ENCODE measurements at regions of chr3 and their contacts with region 1.

Region 1: GRCh38 chr3:177109688-177110330 is 87.5 kb downstream of the TBL1XR1 start:
- DNase-seq: no peak
- ATAC-seq: no peak
- H3K4me3 ChIP-seq: no peak overlapping the region
- H3K27ac ChIP-seq: no peak overlapping the region
- H3K4me1 ChIP-seq: peaks cover 0 to 83% (median 52%) of the 10 kb centered on the region in 9 donors
- H3K27me3 ChIP-seq: no peaks in the 10 kb centered on the region
- CTCF ChIP-seq: no peak

Region 2: GRCh38 chr3:177069514-177070329 is 40.1 kb before region 1 on chr3:
- intact Hi-C with region 1: loop called in 1 of 10 experiments (anchors 10 kb)
- DNase-seq: no peak
- ATAC-seq: no peak
- H3K4me3 ChIP-seq: no peak overlapping the region
- H3K27ac ChIP-seq: no peak overlapping the region
- H3K4me1 ChIP-seq: peaks cover 2 to 62% (median 46%) of the 10 kb centered on the region in 9 donors
- H3K27me3 ChIP-seq: no peaks in the 10 kb centered on the region
- CTCF ChIP-seq: no peak

Region 3: DNA sequence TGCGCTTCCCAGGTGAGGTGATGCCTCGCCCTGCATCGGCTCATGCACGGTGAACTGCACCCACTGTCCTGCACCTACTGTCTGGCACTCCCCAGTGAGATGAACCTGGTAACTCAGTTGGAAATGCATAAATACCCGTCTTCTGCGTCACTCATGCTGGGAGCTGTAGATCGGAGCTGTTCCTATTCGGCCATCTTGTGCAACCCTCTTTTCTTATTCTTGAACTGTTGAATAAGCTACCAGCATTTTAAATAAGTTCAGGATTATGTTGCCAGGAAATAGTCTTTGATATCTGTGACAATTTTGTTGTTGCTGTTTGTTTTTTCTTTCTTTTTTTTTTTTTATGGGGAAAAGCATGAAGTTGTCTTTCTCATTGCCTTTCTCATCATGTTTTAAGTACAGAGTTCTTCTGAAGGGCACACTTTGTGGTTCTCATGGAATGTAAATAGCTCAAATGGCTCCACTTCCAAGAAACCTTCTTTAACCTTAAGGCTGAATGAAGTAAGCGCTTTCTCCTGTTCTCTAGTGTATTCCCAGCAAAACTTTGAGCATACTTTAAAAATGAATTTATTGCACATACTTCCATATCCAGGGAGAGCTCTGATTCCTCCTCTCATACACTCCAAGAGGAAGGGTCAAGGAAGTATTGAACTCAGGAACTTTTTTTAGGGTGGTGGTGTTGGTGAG is 555.5 kb after region 1 on chr3:
- intact Hi-C with region 1: no loop called
- DNase-seq: no peak
- ATAC-seq: no peak
- H3K4me3 ChIP-seq: no peak overlapping the region
- H3K27ac ChIP-seq: no peak overlapping the region
- H3K4me1 ChIP-seq: no peaks in the 10 kb centered on the region
- H3K27me3 ChIP-seq: no peaks in the 10 kb centered on the region
- CTCF ChIP-seq: no peak

Measured in heart right ventricle (tissue), 16 donors.